MCF 10A (cell line): ENCODE measurements at regions of chr12 and their contacts with region 1.

Region 1: GRCh38 chr12:52278541-52279421 is 4.3 kb downstream of the KRT86 start:
- DNase-seq: peak; percentile 77
- H3K4me3 Mint-ChIP-seq: peak overlapping the region; percentile 66
- H3K27ac Mint-ChIP-seq: peak overlapping the region; percentile 98
- H3K4me1 Mint-ChIP-seq: peaks cover 40% of the 10 kb centered on the region
- H3K27me3 Mint-ChIP-seq: no peaks in the 10 kb centered on the region
- CTCF ChIP-seq: peak; percentile 98

Region 2: DNA sequence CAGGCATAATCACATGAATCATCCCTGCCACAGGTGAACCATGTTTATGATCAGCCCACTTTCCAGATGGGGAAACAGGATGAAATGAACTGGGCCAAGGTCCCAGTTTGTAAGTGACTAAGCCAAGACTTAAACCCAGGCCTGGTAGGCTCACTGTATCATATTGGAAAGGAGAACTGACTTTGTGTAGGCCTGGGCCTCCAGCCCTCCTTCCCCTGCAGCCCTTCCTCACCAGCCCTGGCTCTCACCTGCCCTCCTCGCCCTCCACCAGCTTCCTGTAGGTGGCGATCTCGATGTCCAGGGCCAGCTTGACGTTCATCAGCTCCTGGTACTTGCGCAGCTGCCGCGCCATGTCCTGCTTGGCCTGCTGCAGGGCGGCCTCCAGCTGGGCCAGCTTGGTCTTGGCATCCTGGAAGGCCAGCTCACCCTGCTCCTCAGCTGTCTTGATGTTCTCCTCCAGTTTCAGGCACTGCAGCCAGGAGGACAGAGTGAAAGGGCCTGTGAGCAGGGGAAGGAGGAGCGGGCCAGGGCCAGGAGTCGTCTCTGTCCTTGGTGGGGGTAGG is 106.8 kb before region 1 on chr12:
- CTCF ChIA-PET with region 1: interaction called, 15 read pairs
- POLR2A ChIA-PET with region 1: interaction called, 4 read pairs
- intact Hi-C with region 1: no loop called
- DNase-seq: peak; percentile 80
- H3K4me3 Mint-ChIP-seq: no peak overlapping the region
- H3K27ac Mint-ChIP-seq: peak overlapping the region; percentile 64
- H3K4me1 Mint-ChIP-seq: peaks cover 45% of the 10 kb centered on the region
- H3K27me3 Mint-ChIP-seq: no peaks in the 10 kb centered on the region
- CTCF ChIP-seq: peak; percentile 39

Region 3: DNA sequence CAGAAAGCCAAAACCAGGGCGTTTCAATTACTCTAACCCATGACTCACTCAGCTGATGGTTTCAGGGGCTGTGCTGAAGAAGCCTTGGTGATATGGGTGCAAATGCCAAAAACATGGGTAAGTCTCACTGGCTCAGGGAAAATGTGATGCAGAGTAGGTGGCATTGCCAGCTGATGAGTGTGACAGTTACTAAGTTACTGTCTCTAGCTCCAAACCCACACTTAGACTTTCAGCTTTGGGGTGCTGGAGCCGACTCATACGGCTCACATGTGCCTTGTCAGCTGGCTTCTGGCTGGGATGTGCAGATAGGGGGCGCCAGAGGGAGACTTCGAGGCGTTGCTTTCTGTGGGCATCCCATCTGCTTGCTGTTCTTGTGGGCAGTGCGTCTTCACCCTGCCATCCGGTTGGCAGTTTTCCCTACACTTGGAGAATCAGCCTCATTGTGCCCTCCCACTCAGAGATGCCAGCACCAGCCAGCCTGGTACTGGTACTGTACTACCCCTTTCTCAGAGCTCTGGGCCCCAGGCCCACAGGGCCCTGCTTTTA is 56.8 kb before region 1 on chr12:
- CTCF ChIA-PET with region 1: interaction called, 4 read pairs
- POLR2A ChIA-PET with region 1: interaction called, 15 read pairs
- intact Hi-C with region 1: no loop called
- DNase-seq: peak; percentile 93
- H3K4me3 Mint-ChIP-seq: no peak overlapping the region
- H3K27ac Mint-ChIP-seq: peak overlapping the region; percentile 37
- H3K4me1 Mint-ChIP-seq: peaks cover 40% of the 10 kb centered on the region
- H3K27me3 Mint-ChIP-seq: no peaks in the 10 kb centered on the region
- CTCF ChIP-seq: peak; percentile 45

Region 4: DNA sequence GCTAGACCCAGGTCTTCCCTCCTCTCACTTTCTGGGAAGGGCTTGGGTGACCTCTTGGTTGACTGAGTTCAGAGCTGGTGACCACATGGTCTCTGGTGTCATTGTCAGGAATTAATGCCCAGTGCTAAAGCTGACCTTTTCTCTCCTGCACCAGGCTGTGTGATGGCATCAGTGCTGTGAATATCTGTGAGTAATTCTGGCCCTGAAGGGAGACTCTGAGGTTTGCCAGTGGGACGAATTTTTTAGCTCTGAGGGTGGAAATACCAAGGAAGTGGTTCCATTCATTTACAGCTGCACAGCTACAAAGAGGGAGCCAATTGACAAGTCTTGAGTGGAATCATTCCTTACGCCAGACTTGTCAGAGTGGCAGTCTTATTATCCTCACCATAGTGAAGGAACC is 10.6 kb before region 1 on chr12:
- CTCF ChIA-PET with region 1: interaction called, 52 read pairs
- POLR2A ChIA-PET with region 1: interaction called, 14 read pairs
- intact Hi-C with region 1: no loop called
- DNase-seq: no peak
- H3K4me3 Mint-ChIP-seq: no peak overlapping the region
- H3K27ac Mint-ChIP-seq: no peak overlapping the region
- H3K4me1 Mint-ChIP-seq: peaks cover 6% of the 10 kb centered on the region
- H3K27me3 Mint-ChIP-seq: no peaks in the 10 kb centered on the region
- CTCF ChIP-seq: no peak

Region 5: GRCh38 chr12:52338241-52338960 is 59.6 kb after region 1 on chr12:
- CTCF ChIA-PET with region 1: interaction called, 11 read pairs
- POLR2A ChIA-PET with region 1: interaction called, 22 read pairs
- intact Hi-C with region 1: no loop called
- DNase-seq: peak; percentile 81
- H3K4me3 Mint-ChIP-seq: peak overlapping the region; percentile 39
- H3K27ac Mint-ChIP-seq: peak overlapping the region; percentile 73
- H3K4me1 Mint-ChIP-seq: peaks cover 29% of the 10 kb centered on the region
- H3K27me3 Mint-ChIP-seq: no peaks in the 10 kb centered on the region
- CTCF ChIP-seq: no peak

Region 6: GRCh38 chr12:52759695-52760094 is 480.9 kb after region 1 on chr12:
- CTCF ChIA-PET with region 1: no interaction called
- POLR2A ChIA-PET with region 1: no interaction called
- intact Hi-C with region 1: no loop called
- DNase-seq: no peak
- H3K4me3 Mint-ChIP-seq: no peak overlapping the region
- H3K27ac Mint-ChIP-seq: no peak overlapping the region
- H3K4me1 Mint-ChIP-seq: no peaks in the 10 kb centered on the region
- H3K27me3 Mint-ChIP-seq: peaks cover 20% of the 10 kb centered on the region
- CTCF ChIP-seq: no peak

Region 7: DNA sequence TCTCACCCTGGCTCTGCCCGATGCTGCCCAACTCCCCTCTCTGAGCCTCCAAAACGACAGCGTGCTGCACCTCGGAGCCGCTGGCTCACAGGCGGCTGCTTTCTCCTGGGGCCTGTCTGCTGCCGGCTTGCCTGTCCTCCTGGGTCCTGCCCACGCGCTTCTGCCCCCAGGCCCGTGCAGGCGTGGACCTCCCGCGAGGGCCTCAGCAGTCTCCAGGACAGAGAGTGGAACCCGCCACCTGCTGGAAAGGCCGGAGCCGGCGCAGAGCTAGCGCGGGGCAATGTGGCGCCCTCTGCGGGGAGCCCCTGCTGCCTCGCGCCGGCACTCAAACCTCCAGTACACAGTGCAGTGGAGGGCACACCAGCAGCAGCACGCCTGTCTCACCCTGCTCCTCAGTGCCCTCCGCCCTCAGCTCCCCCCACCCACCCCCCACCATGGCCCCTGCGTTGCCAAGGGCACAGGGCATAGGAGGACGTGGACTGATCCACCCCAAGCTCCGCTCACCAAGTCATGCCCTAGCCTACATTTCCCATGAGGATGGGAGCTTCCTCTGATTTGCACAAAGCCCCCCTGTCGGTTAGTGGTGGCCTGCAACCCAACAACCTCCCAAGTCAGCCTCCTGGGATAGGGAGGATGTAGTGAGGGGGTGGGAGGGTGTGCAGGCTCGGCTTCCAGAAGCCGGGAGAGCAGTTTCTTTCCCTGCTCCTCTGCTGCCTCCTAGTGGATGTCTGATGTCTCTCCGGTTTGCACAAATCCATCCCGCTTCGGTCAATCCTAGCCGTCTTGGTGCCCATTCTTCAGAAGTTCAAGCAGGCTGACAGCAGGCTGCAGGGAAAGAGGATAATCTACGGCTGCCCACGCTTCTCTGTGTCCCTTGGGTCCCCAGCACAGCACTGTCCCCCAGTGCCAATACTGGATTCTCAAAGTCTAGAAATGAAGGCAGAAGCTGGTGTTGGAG is 600.9 kb after region 1 on chr12:
- CTCF ChIA-PET with region 1: interaction called, 14 read pairs
- POLR2A ChIA-PET with region 1: interaction called, 9 read pairs
- intact Hi-C with region 1: no loop called
- DNase-seq: peak; percentile 94
- H3K4me3 Mint-ChIP-seq: peak overlapping the region; percentile 48
- H3K27ac Mint-ChIP-seq: no peak overlapping the region
- H3K4me1 Mint-ChIP-seq: peaks cover 48% of the 10 kb centered on the region
- H3K27me3 Mint-ChIP-seq: no peaks in the 10 kb centered on the region
- CTCF ChIP-seq: peak; percentile 89

Region 8: GRCh38 chr12:52992699-52993557 is 714.1 kb after region 1 on chr12:
- CTCF ChIA-PET with region 1: no interaction called
- POLR2A ChIA-PET with region 1: no interaction called
- intact Hi-C with region 1: no loop called
- DNase-seq: peak; percentile 43
- H3K4me3 Mint-ChIP-seq: no peak overlapping the region
- H3K27ac Mint-ChIP-seq: no peak overlapping the region
- H3K4me1 Mint-ChIP-seq: peaks cover 8% of the 10 kb centered on the region
- H3K27me3 Mint-ChIP-seq: no peaks in the 10 kb centered on the region
- CTCF ChIP-seq: no peak